OCI-LY7 (cell line): ENCODE measurements at regions of chr19 and their contacts with region 1.

Region 1: GRCh38 chr19:32570081-32570785 is 10.8 kb upstream of the PDCD5 start:
- DNase-seq: peak; percentile 42
- H3K4me3 ChIP-seq: no peak overlapping the region
- H3K27ac ChIP-seq: no peak overlapping the region
- H3K4me1 ChIP-seq: no peaks in the 10 kb centered on the region
- CTCF ChIP-seq: peak; percentile 74

Region 2: GRCh38 chr19:32318880-32319520 is 251.2 kb before region 1 on chr19:
- CTCF ChIA-PET with region 1: no interaction called
- POLR2A ChIA-PET with region 1: no interaction called
- intact Hi-C with region 1: no loop called
- DNase-seq: peak; percentile 9
- H3K4me3 ChIP-seq: no peak overlapping the region
- H3K27ac ChIP-seq: no peak overlapping the region
- H3K4me1 ChIP-seq: no peaks in the 10 kb centered on the region
- CTCF ChIP-seq: peak; percentile 55

Region 3: DNA sequence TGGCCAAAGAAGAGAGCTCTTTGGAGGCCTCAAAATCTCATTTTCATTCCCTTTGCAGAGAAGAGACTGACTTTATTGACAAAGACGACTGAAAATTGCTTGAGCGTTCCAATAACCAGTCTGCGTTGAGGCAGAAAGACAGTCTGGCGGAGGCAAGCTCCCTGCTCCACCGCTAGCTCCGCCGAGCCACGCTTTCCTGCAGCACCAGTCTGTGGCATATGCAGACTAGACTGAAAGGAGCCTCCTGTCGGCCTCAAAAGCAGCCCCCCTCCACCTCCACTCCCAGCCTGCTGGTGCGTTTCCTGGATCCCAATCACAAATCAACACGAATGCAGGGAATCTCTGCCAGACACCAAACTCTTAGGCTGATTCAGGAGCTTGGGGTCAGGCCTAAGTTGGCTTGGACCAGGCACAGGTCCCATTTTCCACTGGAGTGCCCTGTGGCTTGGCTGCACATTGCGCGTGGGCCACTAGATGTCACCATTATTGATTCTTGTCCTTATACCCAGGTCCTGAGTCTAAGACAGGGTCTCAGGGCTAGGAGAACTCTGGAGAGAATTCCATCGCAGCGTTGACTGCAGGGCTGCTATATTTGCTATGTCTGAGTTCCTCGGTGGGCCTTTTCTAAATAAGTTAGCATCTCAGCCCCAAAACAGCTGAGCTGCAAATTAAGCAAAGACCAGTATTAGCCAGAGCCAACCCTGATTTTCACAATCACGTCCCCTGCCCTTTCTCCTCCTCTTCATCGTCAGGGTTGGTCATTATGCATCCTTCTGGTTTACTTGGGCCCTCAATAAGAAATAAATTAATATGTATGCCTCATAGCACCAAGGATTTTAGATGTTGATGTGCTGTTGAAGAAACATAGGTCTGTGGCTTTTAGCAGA is 230.0 kb before region 1 on chr19:
- CTCF ChIA-PET with region 1: no interaction called
- POLR2A ChIA-PET with region 1: interaction called, 3 read pairs
- intact Hi-C with region 1: loop called (anchors 5 kb)
- DNase-seq: peak; percentile 44
- H3K4me3 ChIP-seq: no peak overlapping the region
- H3K27ac ChIP-seq: no peak overlapping the region
- H3K4me1 ChIP-seq: no peaks in the 10 kb centered on the region
- CTCF ChIP-seq: peak; percentile 78